Vagina (tissue), 2 donors: ENCODE measurements at regions of chr1 and their contacts with region 1.

Region 1: GRCh38 chr1:206489980-206490770 is 17.2 kb upstream of the RASSF5 start:
- DNase-seq: no peak
- H3K4me3 ChIP-seq: no peak overlapping the region
- H3K27ac ChIP-seq: no peak overlapping the region
- H3K4me1 ChIP-seq: peaks cover 13% of the 10 kb centered on the region
- H3K27me3 ChIP-seq: no peaks in the 10 kb centered on the region
- CTCF ChIP-seq: peak; percentile 80 to 89 (median 89)
- POLR2A ChIP-seq: no peak

Region 2: GRCh38 chr1:206583707-206584648 is 93.8 kb after region 1 on chr1:
- intact Hi-C with region 1: loop called (anchors 5 kb)
- DNase-seq: no peak
- H3K4me3 ChIP-seq: no peak overlapping the region
- H3K27ac ChIP-seq: peak overlapping the region; percentile 19
- H3K4me1 ChIP-seq: peaks cover 60% of the 10 kb centered on the region
- H3K27me3 ChIP-seq: no peaks in the 10 kb centered on the region
- CTCF ChIP-seq: peak; percentile 80 to 93 (median 87)
- POLR2A ChIP-seq: no peak